ENCODE measurements at regions of chr16 and their contacts with region 1.

Region 1: DNA sequence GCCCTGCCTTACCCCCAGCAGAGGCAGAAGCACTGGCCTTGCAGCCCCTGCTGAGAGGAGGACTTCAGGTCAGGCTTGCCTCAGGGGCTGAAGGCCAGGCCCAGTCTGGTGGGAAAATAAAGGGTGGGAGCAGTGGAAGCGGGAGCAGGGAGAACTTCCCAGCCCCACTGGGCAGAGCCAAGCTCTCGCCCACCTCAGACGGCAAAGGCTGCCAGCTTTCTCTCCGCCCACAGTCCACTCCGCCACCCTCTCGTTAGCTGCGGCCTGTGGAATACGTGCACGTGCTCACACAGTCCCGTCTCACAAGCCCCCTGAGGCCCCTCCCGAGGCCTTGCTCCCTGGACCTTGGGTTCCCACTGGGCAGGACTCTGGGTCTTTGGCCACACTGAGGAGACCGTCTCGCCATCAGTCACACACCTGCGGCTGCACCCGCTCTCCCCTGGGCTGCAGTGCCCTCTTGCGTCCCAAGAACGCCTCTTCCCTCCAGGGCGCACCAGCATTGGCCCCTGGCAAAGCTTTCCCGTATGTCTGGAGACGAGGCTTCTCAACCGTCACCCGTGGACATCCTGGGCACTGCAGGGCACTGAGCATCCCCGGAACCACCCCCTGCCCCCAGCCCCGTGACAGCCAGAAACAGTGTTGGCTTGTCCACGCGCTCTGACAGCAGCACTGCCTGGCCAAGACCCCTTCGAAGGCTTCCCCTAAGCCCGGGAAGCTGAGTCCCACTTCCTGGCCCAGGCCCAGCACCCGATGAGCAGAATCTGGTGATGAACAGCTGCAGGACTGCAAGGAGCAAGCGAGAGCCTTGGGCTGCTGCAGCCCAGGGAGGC is 8.3 kb downstream of the MRPL28 start:
- DNase-seq: peak; percentile 57
- ATAC-seq: peak; percentile 92
- H3K4me3 Mint-ChIP-seq: no peak overlapping the region
- H3K27ac Mint-ChIP-seq: no peak overlapping the region
- H3K4me1 Mint-ChIP-seq: peaks cover 3% of the 10 kb centered on the region
- H3K27me3 Mint-ChIP-seq: peaks cover 5% of the 10 kb centered on the region
- CTCF ChIP-seq: peak; percentile 45

Region 2: DNA sequence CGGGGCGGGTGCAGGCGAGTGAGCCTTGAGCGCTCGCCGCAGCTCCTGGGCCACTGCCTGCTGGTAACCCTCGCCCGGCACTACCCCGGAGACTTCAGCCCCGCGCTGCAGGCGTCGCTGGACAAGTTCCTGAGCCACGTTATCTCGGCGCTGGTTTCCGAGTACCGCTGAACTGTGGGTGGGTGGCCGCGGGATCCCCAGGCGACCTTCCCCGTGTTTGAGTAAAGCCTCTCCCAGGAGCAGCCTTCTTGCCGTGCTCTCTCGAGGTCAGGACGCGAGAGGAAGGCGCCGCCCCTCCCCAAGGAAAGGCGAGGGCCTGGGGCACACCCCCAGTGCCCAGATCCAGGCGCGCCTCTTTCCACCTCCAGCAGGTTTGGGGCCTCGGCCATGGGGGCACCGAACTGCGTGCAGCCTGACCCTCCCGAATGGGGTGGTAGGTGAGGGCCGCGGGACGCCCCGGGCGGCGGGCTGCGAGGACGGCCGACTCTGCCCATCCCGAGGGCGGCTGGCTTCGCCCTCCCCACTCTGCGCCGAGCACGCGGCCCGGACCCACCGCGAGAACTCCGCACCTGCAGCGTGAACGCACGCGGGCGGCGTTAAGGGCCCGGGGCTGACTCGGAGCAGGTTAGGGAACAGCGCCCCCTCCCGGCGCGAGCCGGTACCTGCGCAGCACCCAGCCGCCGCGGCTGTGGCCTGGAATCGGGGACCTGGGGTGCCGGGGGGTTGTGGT is 181.0 kb before region 1 on chr16:
- CTCF ChIA-PET with region 1: no interaction called
- POLR2A ChIA-PET with region 1: no interaction called
- intact Hi-C with region 1: loop called (anchors 1 kb)
- DNase-seq: peak; percentile 79
- ATAC-seq: peak; percentile 83
- H3K4me3 Mint-ChIP-seq: peak overlapping the region; percentile 19
- H3K27ac Mint-ChIP-seq: no peak overlapping the region
- H3K4me1 Mint-ChIP-seq: peaks cover 10% of the 10 kb centered on the region
- H3K27me3 Mint-ChIP-seq: peaks cover 11% of the 10 kb centered on the region
- CTCF ChIP-seq: peak; percentile 84